Psoas muscle (tissue), 8 donors: ENCODE measurements at regions of chr12 and their contacts with region 1.

Region 1: GRCh38 chr12:32302218-32303173 is 96.9 kb upstream of the FGD4 start:
- DNase-seq: no peak
- ATAC-seq: peak in 1 of 4 donors; percentile 59
- H3K4me3 ChIP-seq: no peak overlapping the region
- H3K27ac ChIP-seq: no peak overlapping the region
- H3K4me1 ChIP-seq: no peaks in the 10 kb centered on the region
- H3K27me3 ChIP-seq: no peaks in the 10 kb centered on the region
- CTCF ChIP-seq: peak; percentile 16

Region 2: DNA sequence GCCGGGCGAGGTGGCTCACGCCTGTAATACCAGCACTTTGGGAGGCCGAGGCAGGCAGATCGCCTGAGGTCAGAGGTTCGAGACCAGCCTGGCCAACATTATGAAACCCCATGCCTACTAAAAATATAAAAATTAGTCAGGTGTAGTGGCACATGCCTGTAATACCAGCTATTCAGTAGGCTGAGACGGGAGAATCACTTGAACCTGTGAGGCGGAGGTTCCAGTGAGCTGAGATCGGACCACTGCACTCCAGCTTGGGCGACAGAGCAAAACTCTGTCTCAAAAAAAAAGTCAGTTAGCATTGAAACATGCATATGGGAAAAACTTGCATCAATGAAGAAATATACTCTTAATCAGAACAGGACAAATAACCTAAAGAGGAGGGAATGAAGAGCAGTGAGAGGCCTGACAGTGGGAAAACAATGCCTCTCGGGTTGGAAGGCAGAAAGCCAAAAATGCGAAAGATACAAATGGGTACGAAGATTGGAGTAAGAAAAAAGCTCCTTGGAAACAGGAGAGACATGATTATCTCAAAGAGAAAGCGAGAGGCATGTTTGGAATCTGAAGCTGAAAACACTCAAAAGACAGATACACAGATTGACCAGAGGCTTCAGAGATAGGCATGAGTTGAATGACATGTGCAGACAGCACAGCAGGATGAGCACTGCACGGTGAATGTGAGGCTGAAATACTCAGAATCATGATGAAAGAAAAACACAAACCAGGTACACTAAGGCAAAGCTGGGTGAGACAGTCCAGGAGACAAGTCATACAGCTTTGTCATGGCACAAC is 312.7 kb before region 1 on chr12:
- intact Hi-C with region 1: loop called in 1 of 2 experiments (anchors 10 kb)
- DNase-seq: no peak
- ATAC-seq: no peak
- H3K4me3 ChIP-seq: no peak overlapping the region
- H3K27ac ChIP-seq: no peak overlapping the region
- H3K4me1 ChIP-seq: no peaks in the 10 kb centered on the region
- H3K27me3 ChIP-seq: no peaks in the 10 kb centered on the region
- CTCF ChIP-seq: no peak

Region 3: DNA sequence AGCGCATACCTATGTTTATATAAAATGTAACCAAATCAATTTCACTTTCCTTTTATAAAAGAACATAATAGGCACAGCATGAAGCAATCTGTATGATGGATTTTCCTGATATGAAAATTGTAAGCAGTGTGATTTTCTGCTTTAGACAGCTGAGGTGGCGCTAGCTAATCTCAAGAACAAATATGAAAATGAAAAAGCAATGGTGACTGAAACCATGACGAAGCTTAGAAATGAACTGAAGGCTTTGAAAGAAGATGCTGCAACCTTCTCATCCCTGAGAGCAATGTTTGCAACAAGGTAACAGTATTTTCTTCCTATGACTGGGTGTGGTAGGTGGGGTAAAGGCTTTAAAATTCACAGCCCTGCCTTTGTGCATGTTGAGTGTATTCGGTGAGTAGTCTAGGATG is 31.9 kb after region 1 on chr12:
- intact Hi-C with region 1: no loop called
- DNase-seq: no peak
- ATAC-seq: no peak
- H3K4me3 ChIP-seq: no peak overlapping the region
- H3K27ac ChIP-seq: no peak overlapping the region
- H3K4me1 ChIP-seq: no peaks in the 10 kb centered on the region
- H3K27me3 ChIP-seq: no peaks in the 10 kb centered on the region
- CTCF ChIP-seq: no peak